ENCODE measurements at regions of chr9 and their contacts with region 1.

Region 1: DNA sequence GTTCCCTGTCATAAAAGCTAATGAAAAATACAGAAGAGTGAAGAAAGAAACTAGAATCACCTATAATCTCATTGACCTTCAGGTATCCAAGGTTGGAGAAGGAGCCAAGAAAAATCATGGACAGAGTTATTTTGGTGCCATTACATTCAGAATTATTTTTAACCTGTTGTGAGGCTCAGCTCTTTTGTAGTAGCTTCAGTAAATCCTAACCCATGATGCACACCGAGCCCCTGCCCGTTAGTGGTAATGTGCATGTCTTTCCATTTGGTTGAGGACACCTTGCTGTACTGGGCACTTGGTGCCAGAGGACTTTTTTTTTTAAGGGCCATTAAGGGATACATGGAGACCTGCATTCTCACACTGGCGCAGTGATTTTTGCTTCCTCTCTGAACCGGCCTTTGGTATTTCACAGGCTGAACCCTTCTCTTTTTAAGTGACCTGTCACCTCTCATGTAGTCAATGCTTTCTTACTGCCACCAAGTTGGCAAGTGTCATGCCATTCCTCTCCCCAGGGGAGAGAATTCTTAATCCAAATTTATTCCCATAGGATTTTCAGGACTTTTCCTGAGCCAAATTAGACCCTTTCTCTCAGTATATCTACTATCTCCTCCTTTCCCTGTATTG is 125.6 kb downstream of the SMARCA2 start:
- DNase-seq: no peak
- H3K4me3 ChIP-seq: no peak overlapping the region
- H3K27ac ChIP-seq: no peak overlapping the region
- H3K4me1 ChIP-seq: peaks cover 0 to 15% (median 7%) of the 10 kb centered on the region in 4 donors
- H3K27me3 ChIP-seq: no peaks in the 10 kb centered on the region
- CTCF ChIP-seq: no peak
- EP300 ChIP-seq: no peak
- POLR2A ChIP-seq: no peak

Region 2: GRCh38 chr9:2655411-2655901 is 514.7 kb after region 1 on chr9:
- intact Hi-C with region 1: loop called (anchors 10 kb)
- DNase-seq: no peak
- H3K4me3 ChIP-seq: no peak overlapping the region
- H3K27ac ChIP-seq: peak overlapping the region in 1 of 4 donors; percentile 44
- H3K4me1 ChIP-seq: peaks cover 0 to 8% (median 3%) of the 10 kb centered on the region in 4 donors
- H3K27me3 ChIP-seq: no peaks in the 10 kb centered on the region
- CTCF ChIP-seq: no peak
- EP300 ChIP-seq: no peak
- POLR2A ChIP-seq: no peak

Measured in esophagus muscularis mucosa (tissue), 4 donors.